HepG2 (cell line): ENCODE measurements at regions of chr9 and their contacts with region 1.

Region 1: DNA sequence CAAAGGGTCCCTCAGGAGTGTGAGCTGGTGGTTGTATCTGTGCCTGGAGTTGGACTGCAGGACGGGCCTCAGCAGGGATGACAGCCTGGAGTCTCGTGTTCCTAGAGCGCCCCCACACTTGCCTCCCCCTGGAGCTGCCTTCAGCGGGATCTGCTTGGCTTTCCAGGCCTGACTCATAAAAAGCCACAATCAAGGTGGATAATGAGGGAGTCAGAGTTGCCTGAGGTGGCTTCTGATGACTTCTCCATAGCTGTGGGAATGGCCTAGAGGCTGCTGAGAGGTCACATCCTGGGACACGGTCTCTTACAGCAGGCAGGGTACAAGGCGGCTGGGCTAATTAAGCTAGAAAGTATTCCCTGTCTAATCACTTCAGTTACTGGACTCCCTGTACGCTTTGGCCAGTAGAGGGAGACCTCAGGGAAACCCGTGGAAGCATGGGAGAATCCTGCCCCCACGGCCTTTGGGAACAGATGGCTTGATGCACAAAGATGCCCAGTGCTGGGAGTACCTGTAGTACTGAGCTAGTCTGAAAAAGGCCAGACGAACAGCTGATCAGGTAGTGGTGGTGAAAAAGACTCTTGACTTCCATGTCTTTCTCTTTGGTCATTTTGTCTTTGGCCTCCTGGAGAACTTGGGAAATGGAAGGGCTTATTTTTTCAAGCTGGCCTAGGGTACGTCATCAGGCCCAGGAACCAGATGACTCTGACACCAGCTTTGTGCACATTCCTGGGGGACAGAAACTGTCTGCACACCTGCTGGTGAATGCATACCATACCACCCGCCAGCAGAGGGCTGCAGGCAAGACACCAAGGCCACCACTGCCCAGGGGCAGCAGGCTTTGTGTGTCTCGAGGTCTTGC is 16.1 kb upstream of the FRRS1L start:
- DNase-seq: peak; percentile 81
- ATAC-seq: peak; percentile 94
- H3K4me3 ChIP-seq: peak overlapping the region; percentile 31 to 70 (median 51)
- H3K27ac ChIP-seq: peak overlapping the region; percentile 19
- H3K4me1 ChIP-seq: peaks cover 44% of the 10 kb centered on the region
- H3K27me3 ChIP-seq: 0 out of 5 replicates have a peak, but pooled peaks cover 0 to 2% of the 10 kb centered on the region in 2 experiments
- CTCF ChIP-seq: peak; percentile 78
- EP300 ChIP-seq: no peak
- POLR2A ChIP-seq: no peak
- RAD21 ChIP-seq: peak; percentile 75

Region 2: DNA sequence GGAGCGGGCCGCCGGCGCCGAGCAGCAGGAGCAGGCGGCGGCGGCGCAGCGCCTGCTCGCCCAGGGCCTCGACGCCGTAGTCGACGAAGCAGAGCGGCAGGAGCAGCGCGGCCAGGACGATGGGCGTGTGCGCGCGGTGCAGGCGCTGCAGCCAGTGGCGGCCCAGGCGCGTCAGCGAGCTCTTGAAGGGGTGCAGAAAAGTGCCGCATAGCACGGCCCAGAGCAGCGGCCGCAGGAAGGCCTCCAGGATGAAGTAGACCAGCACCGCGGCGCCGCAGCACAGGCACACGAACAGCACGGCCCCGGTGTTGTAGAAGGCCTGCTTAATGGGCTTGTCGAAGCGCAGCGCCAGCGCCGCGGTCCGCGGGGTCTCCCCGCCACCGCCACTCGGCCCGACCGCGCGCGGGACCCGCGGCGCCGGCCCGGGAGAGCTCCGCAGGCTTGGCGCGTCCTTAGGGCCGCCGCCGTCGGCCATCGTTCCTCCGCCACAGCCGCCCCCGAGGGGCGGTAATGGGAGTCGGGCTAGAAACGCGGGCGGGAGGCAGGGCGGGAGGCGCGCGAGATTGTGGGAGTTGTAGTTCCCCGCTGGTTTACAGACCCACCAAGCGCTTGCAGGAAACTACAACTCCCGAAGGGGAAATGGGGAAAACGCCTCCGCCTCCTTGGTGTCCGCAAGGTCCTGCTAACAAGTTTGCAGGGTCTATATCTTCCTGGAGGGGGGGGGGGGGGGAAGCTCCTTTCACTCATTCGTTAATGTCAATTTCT is 63.5 kb before region 1 on chr9 and contains the start of gene TMEM245:
- CTCF ChIA-PET with region 1: no interaction called
- POLR2A ChIA-PET with region 1: interaction called, 3 read pairs
- in situ Hi-C with region 1: no loop called
- intact Hi-C with region 1: loop called (anchors 5 kb)
- DNase-seq: peak; percentile 98
- ATAC-seq: peak; percentile 90
- H3K4me3 ChIP-seq: peak within 1 kb of the TSS; percentile 91 to 96 (median 95)
- H3K27ac ChIP-seq: peak within 1 kb of the TSS; percentile 77
- H3K4me1 ChIP-seq: peaks cover 81% of the 10 kb centered on the region
- H3K27me3 ChIP-seq: no peaks in the 10 kb centered on the region
- CTCF ChIP-seq: peak; percentile 0; the same call in 1 of the 2 replicates
- EP300 ChIP-seq: 0 out of 4 replicates have a peak, but pooled peaks of 1 of the 2 experiments have one; percentile 11
- POLR2A ChIP-seq: peak; percentile 66 to 74
- RAD21 ChIP-seq: 0 out of 2 replicates have a peak, but pooled peaks have one; percentile 22
- total RNA-seq, gene TMEM245: 39.7 and 55.4 TPM in 2 replicates

Region 3: DNA sequence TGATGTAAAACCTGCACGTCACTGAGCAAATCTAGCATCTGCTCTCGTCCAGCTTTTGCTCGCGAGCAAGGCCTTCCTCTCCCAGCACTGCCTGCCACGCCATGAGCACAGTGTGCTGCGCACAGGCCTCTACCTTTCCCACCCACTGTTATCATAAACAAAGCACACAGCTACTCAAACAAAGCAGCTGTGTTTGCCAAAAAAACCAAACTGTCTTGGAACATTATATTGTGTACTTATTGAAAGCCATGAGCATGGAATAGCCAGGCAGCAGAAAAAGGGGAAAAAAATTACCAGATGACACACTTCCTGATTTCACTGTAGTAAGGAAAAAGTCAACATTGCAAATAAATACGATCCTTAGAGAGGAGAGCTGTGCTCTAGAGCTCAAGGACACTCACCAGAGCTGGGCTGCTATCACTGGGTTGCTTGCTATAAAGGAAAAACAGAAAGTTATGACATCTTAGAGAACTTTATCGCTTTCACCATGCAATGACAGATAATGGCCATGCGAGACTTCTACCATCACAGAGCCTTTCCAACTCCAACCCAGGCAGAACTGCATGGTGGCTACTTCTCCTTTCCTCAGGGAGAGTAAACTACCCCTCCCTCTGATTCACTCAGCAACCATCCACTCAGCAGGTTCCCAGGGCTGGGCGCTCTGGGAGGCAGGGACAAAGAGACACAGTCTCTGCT is 68.1 kb after region 1 on chr9:
- CTCF ChIA-PET with region 1: no interaction called
- POLR2A ChIA-PET with region 1: no interaction called
- in situ Hi-C with region 1: no loop called
- intact Hi-C with region 1: loop called (anchors 2 kb)
- DNase-seq: peak; percentile 97
- ATAC-seq: peak; percentile 89
- H3K4me3 ChIP-seq: peak overlapping the region in 2 of 3 experiments; percentile 15 to 42; a peak in 3 of 6 replicates
- H3K27ac ChIP-seq: peak overlapping the region; percentile 90
- H3K4me1 ChIP-seq: peaks cover 62% of the 10 kb centered on the region
- H3K27me3 ChIP-seq: no peaks in the 10 kb centered on the region
- CTCF ChIP-seq: no peak
- EP300 ChIP-seq: peak in 1 of 2 experiments; percentile 81; a peak in 2 of 4 replicates
- POLR2A ChIP-seq: no peak
- RAD21 ChIP-seq: 0 out of 2 replicates have a peak, but pooled peaks have one; percentile 17

Region 4: DNA sequence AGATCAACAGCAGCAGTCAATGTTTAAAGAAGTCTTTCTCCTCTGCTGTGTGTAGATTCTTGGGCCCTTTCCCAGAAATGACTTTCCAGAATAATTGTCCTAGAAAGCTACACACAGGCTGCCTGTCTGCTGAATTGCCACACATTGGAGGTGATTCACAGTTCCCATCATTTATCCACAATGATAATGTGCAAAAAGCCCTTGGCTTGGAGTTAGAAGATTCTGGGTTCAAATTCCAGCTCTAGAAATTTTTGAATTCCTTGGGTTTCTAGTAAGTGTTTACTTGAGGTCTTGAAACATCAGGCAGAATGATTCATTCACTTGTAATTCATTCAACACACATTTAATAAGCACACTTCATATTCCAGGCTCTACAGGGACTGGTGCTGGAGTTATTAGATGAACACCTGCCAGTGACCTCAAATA is 166.3 kb after region 1 on chr9:
- CTCF ChIA-PET with region 1: interaction called, 9 read pairs
- POLR2A ChIA-PET with region 1: interaction called, 5 read pairs
- in situ Hi-C with region 1: no loop called
- intact Hi-C with region 1: loop called (anchors 5 kb)
- DNase-seq: no peak
- ATAC-seq: no peak
- H3K4me3 ChIP-seq: no peak overlapping the region
- H3K27ac ChIP-seq: no peak overlapping the region
- H3K4me1 ChIP-seq: peaks cover 13% of the 10 kb centered on the region
- H3K27me3 ChIP-seq: 0 out of 5 replicates have a peak, but pooled peaks cover 0 to 3% of the 10 kb centered on the region in 2 experiments
- CTCF ChIP-seq: no peak
- EP300 ChIP-seq: no peak
- POLR2A ChIP-seq: no peak
- RAD21 ChIP-seq: no peak

Region 5: GRCh38 chr9:109520478-109521132 is 337.4 kb after region 1 on chr9:
- CTCF ChIA-PET with region 1: no interaction called
- POLR2A ChIA-PET with region 1: no interaction called
- in situ Hi-C with region 1: loop called (anchors 25 kb)
- intact Hi-C with region 1: no loop called
- DNase-seq: peak; percentile 69
- ATAC-seq: peak; percentile 96
- H3K4me3 ChIP-seq: no peak overlapping the region
- H3K27ac ChIP-seq: no peak overlapping the region
- H3K4me1 ChIP-seq: no peaks in the 10 kb centered on the region
- H3K27me3 ChIP-seq: peaks cover 0 to under 1% of the 10 kb centered on the region in 2 experiments; a peak in 1 of 5 replicates
- CTCF ChIP-seq: peak; percentile 95
- EP300 ChIP-seq: no peak
- POLR2A ChIP-seq: no peak
- RAD21 ChIP-seq: peak; percentile 89